Mammary epithelial cell (primary cell): ENCODE measurements at regions of chr2 and their contacts with region 1.

Region 1: GRCh38 chr2:48107326-48107925 is 201.1 kb upstream of the FBXO11 start:
- DNase-seq: peak; percentile 91
- H3K4me3 ChIP-seq: no peak overlapping the region
- H3K27ac ChIP-seq: peak overlapping the region; percentile 89
- H3K4me1 ChIP-seq: peaks cover 39% of the 10 kb centered on the region
- H3K27me3 ChIP-seq: no peaks in the 10 kb centered on the region
- CTCF ChIP-seq: peak in 1 of 2 donors; percentile 17

Region 2: GRCh38 chr2:47334356-47335136 is 772.9 kb before region 1 on chr2:
- CTCF ChIA-PET with region 1: interaction called, 9 read pairs
- dilution Hi-C with region 1: no loop called
- in situ Hi-C with region 1: no loop called
- intact Hi-C with region 1: loop called (anchors 1 kb)
- DNase-seq: no peak
- H3K4me3 ChIP-seq: no peak overlapping the region
- H3K27ac ChIP-seq: no peak overlapping the region
- H3K4me1 ChIP-seq: peaks cover 4% of the 10 kb centered on the region
- H3K27me3 ChIP-seq: no peaks in the 10 kb centered on the region
- CTCF ChIP-seq: no peak

Region 3: GRCh38 chr2:47767880-47768609 is 339.4 kb before region 1 on chr2:
- CTCF ChIA-PET with region 1: interaction called, 3 read pairs
- dilution Hi-C with region 1: no loop called
- in situ Hi-C with region 1: no loop called
- intact Hi-C with region 1: loop called (anchors 1 kb)
- DNase-seq: peak; percentile 8
- H3K4me3 ChIP-seq: peak overlapping the region in 1 of 3 experiments; percentile 18
- H3K27ac ChIP-seq: no peak overlapping the region
- H3K4me1 ChIP-seq: peaks cover 5% of the 10 kb centered on the region
- H3K27me3 ChIP-seq: no peaks in the 10 kb centered on the region
- CTCF ChIP-seq: peak; percentile 84 to 99

Region 4: GRCh38 chr2:47833516-47833968 is 273.9 kb before region 1 on chr2:
- CTCF ChIA-PET with region 1: interaction called, 13 read pairs
- dilution Hi-C with region 1: no loop called
- in situ Hi-C with region 1: no loop called
- intact Hi-C with region 1: no loop called
- DNase-seq: no peak
- H3K4me3 ChIP-seq: no peak overlapping the region
- H3K27ac ChIP-seq: no peak overlapping the region
- H3K4me1 ChIP-seq: no peaks in the 10 kb centered on the region
- H3K27me3 ChIP-seq: no peaks in the 10 kb centered on the region
- CTCF ChIP-seq: no peak

Region 5: DNA sequence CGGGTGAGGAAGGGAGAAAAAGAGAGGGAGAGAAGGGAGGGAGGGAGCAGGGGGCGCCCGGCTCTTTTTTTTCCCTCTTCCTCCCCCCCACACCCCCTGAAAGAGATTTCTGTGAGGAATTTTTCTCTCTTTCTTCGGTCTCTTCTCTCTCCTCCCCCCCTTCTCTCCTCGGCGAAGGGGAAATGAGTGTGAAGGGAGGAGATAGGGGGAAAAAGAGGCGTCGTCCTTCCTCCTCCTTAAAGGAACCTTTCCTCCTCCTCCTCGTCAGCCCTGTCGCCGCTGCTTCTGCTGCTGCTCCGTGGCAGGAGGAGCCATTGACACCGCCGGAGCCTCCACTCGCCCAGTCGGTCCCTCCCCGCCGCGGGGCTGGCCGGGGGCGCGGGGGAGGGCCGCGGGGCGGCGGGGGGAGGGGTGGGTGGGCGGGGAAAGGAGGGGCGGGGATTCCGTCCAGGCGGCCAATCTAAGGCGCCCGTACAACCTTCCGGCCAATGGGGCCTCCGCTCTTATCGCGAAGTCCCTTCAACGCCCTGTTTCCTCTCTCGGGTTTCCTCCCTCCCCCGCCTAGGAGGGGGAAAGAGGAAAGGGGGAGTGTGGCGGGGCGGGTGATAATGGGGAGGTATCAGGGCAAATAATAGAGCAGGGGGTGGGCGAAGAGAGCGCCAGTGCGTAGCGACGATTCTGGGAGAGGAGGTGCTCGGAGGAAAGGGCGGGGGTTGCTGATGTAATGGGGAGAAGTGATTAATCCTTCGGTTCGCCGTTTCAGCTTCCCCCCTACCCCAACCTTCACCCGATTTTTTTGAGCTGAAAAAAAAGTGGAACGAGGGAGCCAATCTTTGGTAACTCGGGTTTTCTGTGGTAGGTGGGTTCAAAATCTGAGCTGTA is 201.0 kb before region 1 on chr2 and contains the start of gene FBXO11:
- CTCF ChIA-PET with region 1: interaction called, 7 read pairs
- dilution Hi-C with region 1: no loop called
- in situ Hi-C with region 1: no loop called
- intact Hi-C with region 1: loop called (anchors 1 kb)
- DNase-seq: peak; percentile 99
- H3K4me3 ChIP-seq: peak within 1 kb of the TSS; percentile 82 to 96 (median 89)
- H3K27ac ChIP-seq: peak within 1 kb of the TSS; percentile 91
- H3K4me1 ChIP-seq: peaks cover 8% of the 10 kb centered on the region
- H3K27me3 ChIP-seq: no peaks in the 10 kb centered on the region
- CTCF ChIP-seq: peak; percentile 51 to 64
- total RNA-seq, gene FBXO11: 35.0 to 65.5 TPM

Region 6: DNA sequence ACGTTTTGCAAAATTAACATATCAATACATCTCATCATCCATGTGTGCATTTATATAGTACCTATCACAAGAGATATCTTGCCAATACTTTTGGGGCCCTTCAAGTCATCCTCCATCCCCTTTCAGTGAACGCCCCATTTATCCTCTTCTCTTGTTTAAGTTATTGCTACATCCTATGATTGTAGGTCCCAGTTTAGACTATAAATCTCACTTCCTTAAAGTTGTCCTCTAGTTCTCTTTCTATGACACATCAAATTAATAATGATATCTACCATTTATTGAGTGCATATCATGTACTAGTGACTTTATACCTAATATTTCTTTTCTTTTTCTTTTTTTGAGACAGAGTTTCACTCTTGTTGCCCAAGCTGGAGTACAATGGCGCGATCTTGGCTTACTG is 172.4 kb before region 1 on chr2:
- CTCF ChIA-PET with region 1: no interaction called
- dilution Hi-C with region 1: no loop called
- in situ Hi-C with region 1: no loop called
- intact Hi-C with region 1: no loop called
- DNase-seq: no peak
- H3K4me3 ChIP-seq: no peak overlapping the region
- H3K27ac ChIP-seq: no peak overlapping the region
- H3K4me1 ChIP-seq: no peaks in the 10 kb centered on the region
- H3K27me3 ChIP-seq: no peaks in the 10 kb centered on the region
- CTCF ChIP-seq: no peak